Heart left ventricle (tissue), 16 donors: ENCODE measurements at regions of chr14 and their contacts with region 1.

Region 1: DNA sequence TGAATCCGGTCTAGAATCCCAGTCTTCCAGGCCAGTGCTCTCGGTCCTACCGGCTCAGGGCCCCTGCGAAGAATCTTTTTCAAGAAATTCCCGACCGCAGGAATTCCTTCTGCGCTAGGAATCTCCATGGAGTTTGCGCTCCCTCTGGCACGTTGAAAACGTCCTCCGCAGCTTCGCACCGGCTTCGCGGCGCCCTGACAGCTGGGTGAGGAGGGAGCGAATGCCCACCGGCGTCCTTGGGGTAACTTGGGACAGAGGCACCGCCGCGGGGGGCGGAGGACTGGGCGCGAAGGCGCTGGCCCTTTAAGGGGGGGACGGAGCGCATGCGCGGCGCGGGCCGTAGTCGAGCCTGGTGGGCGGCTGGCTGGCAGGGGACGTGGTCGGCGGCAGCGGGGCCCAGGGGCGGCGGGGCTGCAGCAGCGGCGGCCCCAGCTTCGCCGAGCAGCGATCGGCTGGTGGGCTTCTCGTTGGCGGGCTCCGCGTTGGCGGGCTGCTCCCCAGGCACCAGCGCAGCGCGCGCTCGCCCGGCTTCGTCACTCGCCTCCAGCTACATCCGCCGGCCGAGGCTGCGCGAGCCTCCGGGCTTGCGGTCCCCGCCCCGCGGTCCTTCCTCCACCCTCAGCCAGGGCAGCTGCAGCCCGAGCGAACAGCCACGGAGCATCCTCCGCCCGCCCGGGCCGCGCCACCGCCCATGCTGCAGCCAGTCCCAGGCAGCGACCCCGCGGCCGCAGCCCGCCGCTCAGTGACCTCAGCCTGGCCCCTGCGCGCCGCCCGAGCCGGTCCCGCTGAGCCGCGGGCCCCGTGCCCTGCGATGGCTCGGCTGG is at the start of gene VASH1:
- DNase-seq: peak; percentile 74 to 91 (median 85)
- ATAC-seq: peak in 3 of 4 donors; percentile 74 to 85 (median 84)
- H3K4me3 ChIP-seq: peak within 1 kb of the TSS; percentile 51 to 98 (median 86)
- H3K27ac ChIP-seq: peak within 1 kb of the TSS; percentile 73 to 96 (median 89)
- H3K4me1 ChIP-seq: peaks cover 0 to 52% (median 39%) of the 10 kb centered on the region in 12 donors
- H3K27me3 ChIP-seq: peaks cover 0 to 6% (median 0%) of the 10 kb centered on the region in 9 donors
- CTCF ChIP-seq: no peak
- POLR2A ChIP-seq: peak in 1 of 2 donors; percentile 79
- total RNA-seq, gene VASH1: 7.8 to 30.8 (median 11.1) TPM

Region 2: DNA sequence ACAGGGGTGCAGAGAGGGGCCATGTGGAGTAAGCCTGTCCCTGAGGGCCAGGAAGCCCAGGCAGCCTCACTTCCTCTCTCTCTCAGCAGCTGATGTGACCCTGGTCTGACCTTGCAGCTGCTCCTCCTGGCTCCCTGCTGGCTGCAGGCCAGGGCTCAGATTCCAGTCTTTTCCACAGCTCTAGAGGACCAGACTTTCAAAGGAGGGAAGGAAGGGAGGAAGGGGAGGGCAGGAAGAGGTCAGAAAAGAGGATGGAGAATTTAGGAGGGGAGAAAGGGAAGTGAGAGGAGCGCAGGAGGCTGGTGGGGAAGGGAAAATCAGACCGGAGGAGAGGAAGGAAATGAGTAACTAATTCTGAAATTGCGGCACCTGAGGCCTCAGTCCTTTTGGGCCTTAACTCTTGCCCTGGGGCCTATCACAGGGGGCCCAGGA is 41.0 kb before region 1 on chr14:
- intact Hi-C with region 1: loop called in 7 of 10 experiments (anchors 1 to 5 kb)
- DNase-seq: peak; percentile 87 to 94 (median 91)
- ATAC-seq: peak; percentile 74 to 89 (median 84)
- H3K4me3 ChIP-seq: no peak overlapping the region
- H3K27ac ChIP-seq: peak overlapping the region; percentile 29 to 84 (median 72)
- H3K4me1 ChIP-seq: peaks cover 6 to 73% (median 49%) of the 10 kb centered on the region in 12 donors
- H3K27me3 ChIP-seq: no peaks in the 10 kb centered on the region
- CTCF ChIP-seq: no peak
- POLR2A ChIP-seq: no peak

Region 3: GRCh38 chr14:76726551-76726970 is 34.8 kb before region 1 on chr14:
- intact Hi-C with region 1: loop called in 2 of 10 experiments (anchors 2 kb)
- DNase-seq: peak in 2 of 5 donors; percentile 31 to 37
- ATAC-seq: peak; percentile 53 to 75 (median 72)
- H3K4me3 ChIP-seq: peak overlapping the region in 9 of 12 donors; percentile 9 to 33 (median 20)
- H3K27ac ChIP-seq: peak overlapping the region; percentile 50 to 86 (median 72)
- H3K4me1 ChIP-seq: peaks cover 0 to 51% (median 18%) of the 10 kb centered on the region in 12 donors
- H3K27me3 ChIP-seq: no peaks in the 10 kb centered on the region
- CTCF ChIP-seq: no peak
- POLR2A ChIP-seq: no peak

Region 4: GRCh38 chr14:76784266-76785264 is 23.2 kb after region 1 on chr14:
- intact Hi-C with region 1: loop called in 1 of 10 experiments (anchors 2 kb)
- DNase-seq: peak; percentile 85 to 89 (median 86)
- ATAC-seq: peak; percentile 88 to 94 (median 90)
- H3K4me3 ChIP-seq: no peak overlapping the region
- H3K27ac ChIP-seq: peak overlapping the region in 11 of 12 donors; percentile 3 to 79 (median 41)
- H3K4me1 ChIP-seq: peaks cover 0 to 63% (median 48%) of the 10 kb centered on the region in 12 donors
- H3K27me3 ChIP-seq: no peaks in the 10 kb centered on the region
- CTCF ChIP-seq: peak; percentile 88 to 99 (median 92)
- POLR2A ChIP-seq: peak in 1 of 2 donors; percentile 13

Region 5: DNA sequence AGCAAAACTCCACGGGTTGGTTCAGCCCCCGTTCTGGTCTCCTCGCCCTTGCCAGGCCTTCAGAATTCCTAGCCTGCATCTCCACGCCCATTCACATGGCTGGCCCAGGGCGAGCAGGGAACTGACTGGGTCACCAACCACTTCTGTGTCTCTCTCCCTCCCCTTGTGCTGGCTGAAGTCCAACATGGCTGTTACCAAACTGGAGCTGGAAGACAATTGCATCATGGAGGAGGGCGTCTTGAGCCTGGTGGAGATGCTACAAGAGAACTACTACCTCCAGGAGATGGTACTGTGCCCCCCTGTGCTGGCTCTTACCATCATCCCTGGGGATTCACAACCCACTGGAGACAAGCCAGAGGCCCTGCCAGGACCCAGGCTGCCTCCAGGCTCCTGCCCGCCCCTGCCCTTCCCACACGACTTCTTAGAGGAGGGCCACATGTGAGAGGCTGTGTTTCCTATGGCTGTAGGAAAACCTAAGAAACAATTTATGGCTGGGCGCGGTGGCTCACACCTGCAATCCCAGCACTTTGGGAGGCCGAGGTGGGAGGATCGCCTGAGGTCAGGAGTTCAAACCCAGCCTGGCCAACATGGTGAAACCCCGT is 74.8 kb after region 1 on chr14:
- intact Hi-C with region 1: loop called in 1 of 10 experiments (anchors 2 kb)
- DNase-seq: no peak
- ATAC-seq: peak in 1 of 4 donors; percentile 22
- H3K4me3 ChIP-seq: no peak overlapping the region
- H3K27ac ChIP-seq: no peak overlapping the region
- H3K4me1 ChIP-seq: peaks cover 0 to 18% (median 0%) of the 10 kb centered on the region in 12 donors
- H3K27me3 ChIP-seq: no peaks in the 10 kb centered on the region
- CTCF ChIP-seq: no peak
- POLR2A ChIP-seq: no peak